ENCODE measurements at regions of chr20 and their contacts with region 1.

Region 1: GRCh38 chr20:8722276-8722928 is 346.5 kb upstream of the PLCB4 start:
- DNase-seq: peak in 5 of 9 donors; percentile 5 to 44 (median 26)
- ATAC-seq: peak; percentile 61
- H3K4me3 ChIP-seq: no peak overlapping the region
- H3K4me3 Mint-ChIP-seq: no peak overlapping the region
- H3K27ac ChIP-seq: no peak overlapping the region
- H3K27ac Mint-ChIP-seq: no peak overlapping the region
- H3K4me1 ChIP-seq: no peaks in the 10 kb centered on the region
- H3K4me1 Mint-ChIP-seq: no peaks in the 10 kb centered on the region
- H3K27me3 ChIP-seq: no peaks in the 10 kb centered on the region
- H3K27me3 Mint-ChIP-seq: no peaks in the 10 kb centered on the region

Region 2: GRCh38 chr20:6828794-6829423 is 1893.5 kb before region 1 on chr20:
- CTCF ChIA-PET with region 1: no interaction called
- POLR2A ChIA-PET with region 1: no interaction called
- intact Hi-C with region 1: loop called in 1 of 2 experiments (anchors 5 kb)
- DNase-seq: peak in 1 of 9 donors; percentile 3
- ATAC-seq: peak; percentile 66
- H3K4me3 ChIP-seq: no peak overlapping the region
- H3K4me3 Mint-ChIP-seq: no peak overlapping the region
- H3K27ac ChIP-seq: no peak overlapping the region
- H3K27ac Mint-ChIP-seq: no peak overlapping the region
- H3K4me1 ChIP-seq: no peaks in the 10 kb centered on the region
- H3K4me1 Mint-ChIP-seq: no peaks in the 10 kb centered on the region
- H3K27me3 ChIP-seq: no peaks in the 10 kb centered on the region
- H3K27me3 Mint-ChIP-seq: no peaks in the 10 kb centered on the region

Region 3: DNA sequence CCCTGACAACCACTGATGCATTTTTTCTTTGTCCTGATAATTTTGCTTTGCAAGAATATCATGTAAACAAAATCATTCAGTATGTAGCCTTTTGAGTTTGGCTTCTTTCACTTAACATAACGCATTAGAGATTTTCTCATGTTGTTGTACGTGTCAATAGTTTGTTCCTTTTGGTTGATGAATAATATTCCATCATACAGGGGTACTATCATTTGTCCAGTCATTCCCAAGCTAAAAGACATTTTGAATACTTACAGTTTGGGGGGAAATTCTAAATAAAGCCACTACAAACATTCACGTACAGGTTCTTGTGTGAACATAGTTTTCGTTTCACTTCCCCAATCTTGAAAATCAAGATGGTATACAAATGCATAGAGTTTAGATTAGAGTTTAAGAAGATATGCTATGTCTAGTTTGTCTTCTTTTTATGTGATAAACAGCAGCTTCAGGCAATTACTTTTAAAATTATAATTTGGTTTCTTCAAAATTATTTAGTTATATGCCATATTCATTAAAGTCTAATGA is 787.3 kb before region 1 on chr20:
- CTCF ChIA-PET with region 1: interaction called, 16 read pairs
- POLR2A ChIA-PET with region 1: no interaction called
- intact Hi-C with region 1: loop called in 1 of 2 experiments (anchors 1 kb)
- DNase-seq: no peak
- ATAC-seq: no peak
- H3K4me3 ChIP-seq: no peak overlapping the region
- H3K4me3 Mint-ChIP-seq: no peak overlapping the region
- H3K27ac ChIP-seq: no peak overlapping the region
- H3K27ac Mint-ChIP-seq: no peak overlapping the region
- H3K4me1 ChIP-seq: no peaks in the 10 kb centered on the region
- H3K4me1 Mint-ChIP-seq: peaks cover 0 to 2% (median 0%) of the 10 kb centered on the region in 7 donors
- H3K27me3 ChIP-seq: peaks cover 0 to 5% of the 10 kb centered on the region in 2 donors
- H3K27me3 Mint-ChIP-seq: peaks cover 6 to 42% (median 23%) of the 10 kb centered on the region in 5 donors

Region 4: GRCh38 chr20:8043687-8044282 is 678.6 kb before region 1 on chr20:
- CTCF ChIA-PET with region 1: interaction called, 8 read pairs
- POLR2A ChIA-PET with region 1: no interaction called
- intact Hi-C with region 1: loop called in 1 of 2 experiments (anchors 1 kb)
- DNase-seq: peak in 7 of 9 donors; percentile 35 to 73 (median 58)
- ATAC-seq: peak; percentile 87
- H3K4me3 ChIP-seq: no peak overlapping the region
- H3K4me3 Mint-ChIP-seq: no peak overlapping the region
- H3K27ac ChIP-seq: no peak overlapping the region
- H3K27ac Mint-ChIP-seq: no peak overlapping the region
- H3K4me1 ChIP-seq: no peaks in the 10 kb centered on the region
- H3K4me1 Mint-ChIP-seq: peaks cover 0 to 4% (median 3%) of the 10 kb centered on the region in 7 donors
- H3K27me3 ChIP-seq: no peaks in the 10 kb centered on the region
- H3K27me3 Mint-ChIP-seq: peaks cover 4 to 20% (median 11%) of the 10 kb centered on the region in 5 donors

Region 5: DNA sequence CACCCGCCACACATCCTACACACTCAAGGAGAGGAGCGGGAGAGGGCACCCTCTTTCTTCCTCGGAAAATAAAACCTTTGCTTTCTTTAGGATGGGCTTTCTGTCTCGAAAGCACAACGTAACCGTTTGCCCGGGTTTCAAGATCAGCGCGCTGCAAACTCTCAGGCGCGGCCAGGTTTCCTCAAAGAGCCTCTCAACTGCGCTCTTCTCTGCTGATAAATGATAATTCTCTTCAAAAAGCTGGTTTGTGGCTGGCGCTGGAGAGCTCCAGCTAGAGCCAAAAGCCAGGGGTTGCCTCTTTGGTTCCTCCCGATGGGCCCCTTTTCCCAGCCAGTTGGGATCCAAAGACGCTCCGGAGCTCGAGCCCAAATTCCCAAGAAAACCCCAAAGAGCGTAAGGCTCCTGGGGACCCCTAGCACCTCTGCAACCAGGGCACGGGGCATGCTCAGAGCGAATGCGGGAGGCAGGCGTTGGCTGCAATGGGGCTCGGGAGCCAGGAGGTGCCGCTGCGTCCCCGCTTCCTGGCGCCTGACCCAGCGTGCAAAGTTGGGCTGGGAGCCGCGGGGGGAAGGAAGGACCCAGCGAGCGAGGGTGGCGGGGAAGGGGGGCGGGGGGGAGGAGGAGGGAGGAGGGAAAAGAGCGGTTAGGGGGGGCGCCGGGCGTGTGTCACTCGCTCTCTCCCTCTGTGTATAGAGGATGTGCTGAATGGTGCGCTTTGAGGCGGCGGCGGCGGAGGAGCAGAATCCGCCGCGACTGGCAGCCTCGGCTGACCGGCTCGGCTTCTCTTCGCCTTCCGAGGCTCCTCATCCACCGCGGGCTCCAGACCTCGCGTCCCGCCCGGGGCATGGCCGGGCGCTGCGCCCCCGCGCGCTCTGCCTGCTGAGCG is 590.6 kb before region 1 on chr20 and contains the start of gene PLCB1:
- CTCF ChIA-PET with region 1: interaction called, 3 read pairs
- POLR2A ChIA-PET with region 1: no interaction called
- intact Hi-C with region 1: loop called in 1 of 2 experiments (anchors 1 kb)
- DNase-seq: peak; percentile 59 to 82 (median 70)
- ATAC-seq: peak; percentile 93
- H3K4me3 ChIP-seq: peak within 1 kb of the TSS; percentile 57
- H3K4me3 Mint-ChIP-seq: peak within 1 kb of the TSS; percentile 67 to 87 (median 80)
- H3K27ac ChIP-seq: no peak within 1 kb of the TSS
- H3K27ac Mint-ChIP-seq: peak within 1 kb of the TSS in 2 of 9 donors; percentile 22 to 42
- H3K4me1 ChIP-seq: peaks cover 6 to 16% of the 10 kb centered on the region in 2 donors
- H3K4me1 Mint-ChIP-seq: peaks cover 7 to 20% (median 9%) of the 10 kb centered on the region in 7 donors
- H3K27me3 ChIP-seq: peaks cover 0 to 3% of the 10 kb centered on the region in 2 donors
- H3K27me3 Mint-ChIP-seq: peaks cover 13 to 54% (median 28%) of the 10 kb centered on the region in 5 donors
- total RNA-seq, gene PLCB1: 0.56 to 17.6 (median 2.3) TPM

Region 6: DNA sequence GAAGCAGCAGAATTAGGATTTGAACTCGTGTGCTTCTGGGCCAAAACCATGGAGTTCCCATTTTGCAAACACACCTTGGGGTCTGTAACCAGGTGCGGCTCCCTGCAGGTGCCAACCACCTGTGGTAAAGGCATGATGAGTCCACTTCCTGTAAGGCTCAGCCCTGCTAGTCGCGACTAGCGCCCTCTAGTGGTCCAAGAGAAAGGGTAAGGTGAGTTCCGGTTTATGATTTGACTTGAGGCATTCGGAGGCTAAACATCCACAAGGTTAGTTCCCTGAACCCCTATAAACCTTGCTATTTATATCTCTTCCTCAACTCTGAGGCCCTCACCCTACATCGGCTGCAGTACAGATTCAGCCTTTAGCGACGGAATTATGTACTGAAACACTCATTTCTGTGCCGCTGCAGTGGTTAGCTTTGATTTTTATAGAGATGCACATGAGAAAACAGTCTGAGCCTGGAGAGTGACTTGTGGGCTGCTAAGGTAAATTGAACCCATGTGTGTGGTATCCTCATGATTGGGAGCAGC is 416.9 kb before region 1 on chr20:
- CTCF ChIA-PET with region 1: no interaction called
- POLR2A ChIA-PET with region 1: no interaction called
- intact Hi-C with region 1: loop called in 1 of 2 experiments (anchors 10 kb)
- DNase-seq: peak; percentile 36 to 78 (median 64)
- ATAC-seq: peak; percentile 95
- H3K4me3 ChIP-seq: no peak overlapping the region
- H3K4me3 Mint-ChIP-seq: peak overlapping the region in 2 of 10 donors; percentile 28 to 45
- H3K27ac ChIP-seq: no peak overlapping the region
- H3K27ac Mint-ChIP-seq: no peak overlapping the region
- H3K4me1 ChIP-seq: peaks cover 0 to 8% of the 10 kb centered on the region in 2 donors
- H3K4me1 Mint-ChIP-seq: peaks cover 0 to 8% (median 0%) of the 10 kb centered on the region in 7 donors
- H3K27me3 ChIP-seq: no peaks in the 10 kb centered on the region
- H3K27me3 Mint-ChIP-seq: no peaks in the 10 kb centered on the region

Region 7: DNA sequence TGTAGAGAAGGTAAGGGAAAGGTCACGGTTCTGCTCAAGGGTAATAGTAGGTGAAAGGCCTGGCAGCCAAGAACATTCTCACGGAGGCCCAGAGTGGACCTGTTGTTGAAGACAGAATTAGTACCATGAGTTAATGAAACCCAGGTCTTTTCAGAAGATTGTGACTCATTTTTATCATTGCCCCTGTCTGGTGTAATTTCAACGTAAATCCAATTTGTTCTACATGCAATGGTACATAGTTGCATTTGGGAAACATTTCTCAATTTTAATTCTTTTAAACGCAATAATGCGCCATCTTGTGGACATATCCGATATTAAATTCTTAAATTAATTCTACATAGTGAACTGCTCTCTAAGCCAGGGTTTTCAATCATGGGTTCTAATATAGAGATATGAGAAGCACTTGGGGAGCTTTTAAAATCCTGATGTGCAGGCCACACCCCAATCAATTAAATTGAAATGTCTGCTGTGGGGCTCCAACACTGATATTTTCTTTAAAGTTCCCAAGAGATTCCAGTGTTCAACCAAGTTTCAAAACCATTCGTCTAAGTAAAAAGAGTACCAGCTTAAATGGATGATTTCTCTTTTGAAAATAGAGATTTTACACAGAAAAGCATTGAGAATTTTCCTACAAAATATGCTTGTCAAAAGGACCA is 332.9 kb before region 1 on chr20:
- CTCF ChIA-PET with region 1: no interaction called
- POLR2A ChIA-PET with region 1: no interaction called
- intact Hi-C with region 1: loop called in 1 of 2 experiments (anchors 10 kb)
- DNase-seq: peak in 5 of 9 donors; percentile 13 to 40 (median 28)
- ATAC-seq: peak; percentile 55
- H3K4me3 ChIP-seq: no peak overlapping the region
- H3K4me3 Mint-ChIP-seq: no peak overlapping the region
- H3K27ac ChIP-seq: no peak overlapping the region
- H3K27ac Mint-ChIP-seq: peak overlapping the region in 1 of 9 donors; percentile 23
- H3K4me1 ChIP-seq: no peaks in the 10 kb centered on the region
- H3K4me1 Mint-ChIP-seq: peaks cover 0 to 6% (median 0%) of the 10 kb centered on the region in 7 donors
- H3K27me3 ChIP-seq: no peaks in the 10 kb centered on the region
- H3K27me3 Mint-ChIP-seq: peaks cover 0 to 9% (median 0%) of the 10 kb centered on the region in 5 donors

Region 8: DNA sequence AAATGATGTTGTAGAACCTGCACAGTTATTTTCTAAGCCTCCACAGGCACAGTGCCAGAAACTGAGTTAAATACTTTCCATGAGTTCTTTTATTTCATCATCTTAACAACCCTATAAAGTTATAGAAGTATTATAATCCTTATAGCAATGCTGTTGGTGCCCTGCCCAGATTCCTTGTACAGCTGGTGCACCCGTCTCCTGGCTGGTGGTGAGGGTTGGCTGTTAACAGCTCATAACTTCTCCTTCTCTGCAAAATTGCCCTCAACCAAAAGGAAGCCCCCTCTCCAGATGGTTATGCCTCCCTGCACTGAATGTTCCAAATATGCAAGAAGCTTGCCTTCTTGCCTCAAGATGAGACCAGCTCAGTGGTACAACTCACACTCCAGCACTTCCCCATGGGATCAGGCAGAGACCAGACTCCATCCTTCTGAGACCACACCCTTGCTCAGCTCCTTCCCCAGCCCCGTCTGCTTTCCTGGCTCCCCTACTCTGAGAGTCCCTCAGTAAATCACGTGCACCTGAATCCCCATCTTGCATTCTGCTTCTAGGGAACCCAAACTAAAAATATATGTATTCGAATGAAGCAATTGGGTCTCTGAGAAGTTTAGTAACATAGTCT is 42.1 kb after region 1 on chr20:
- CTCF ChIA-PET with region 1: no interaction called
- POLR2A ChIA-PET with region 1: no interaction called
- intact Hi-C with region 1: no loop called
- DNase-seq: no peak
- ATAC-seq: no peak
- H3K4me3 ChIP-seq: no peak overlapping the region
- H3K4me3 Mint-ChIP-seq: no peak overlapping the region
- H3K27ac ChIP-seq: no peak overlapping the region
- H3K27ac Mint-ChIP-seq: no peak overlapping the region
- H3K4me1 ChIP-seq: no peaks in the 10 kb centered on the region
- H3K4me1 Mint-ChIP-seq: peaks cover 0 to 4% (median 0%) of the 10 kb centered on the region in 7 donors
- H3K27me3 ChIP-seq: no peaks in the 10 kb centered on the region
- H3K27me3 Mint-ChIP-seq: no peaks in the 10 kb centered on the region

Measured in naive thymus-derived CD4-positive, alpha-beta T cell (primary cell).